ENCODE measurements at regions of chr5 and their contacts with region 1.

Region 1: GRCh38 chr5:112160652-112161391 is 258.3 kb downstream of the EPB41L4A start:
- DNase-seq: peak; percentile 94
- H3K4me3 Mint-ChIP-seq: peak overlapping the region; percentile 86
- H3K27ac Mint-ChIP-seq: peak overlapping the region; percentile 70
- H3K4me1 Mint-ChIP-seq: peaks cover 43% of the 10 kb centered on the region
- H3K27me3 Mint-ChIP-seq: no peaks in the 10 kb centered on the region

Region 2: DNA sequence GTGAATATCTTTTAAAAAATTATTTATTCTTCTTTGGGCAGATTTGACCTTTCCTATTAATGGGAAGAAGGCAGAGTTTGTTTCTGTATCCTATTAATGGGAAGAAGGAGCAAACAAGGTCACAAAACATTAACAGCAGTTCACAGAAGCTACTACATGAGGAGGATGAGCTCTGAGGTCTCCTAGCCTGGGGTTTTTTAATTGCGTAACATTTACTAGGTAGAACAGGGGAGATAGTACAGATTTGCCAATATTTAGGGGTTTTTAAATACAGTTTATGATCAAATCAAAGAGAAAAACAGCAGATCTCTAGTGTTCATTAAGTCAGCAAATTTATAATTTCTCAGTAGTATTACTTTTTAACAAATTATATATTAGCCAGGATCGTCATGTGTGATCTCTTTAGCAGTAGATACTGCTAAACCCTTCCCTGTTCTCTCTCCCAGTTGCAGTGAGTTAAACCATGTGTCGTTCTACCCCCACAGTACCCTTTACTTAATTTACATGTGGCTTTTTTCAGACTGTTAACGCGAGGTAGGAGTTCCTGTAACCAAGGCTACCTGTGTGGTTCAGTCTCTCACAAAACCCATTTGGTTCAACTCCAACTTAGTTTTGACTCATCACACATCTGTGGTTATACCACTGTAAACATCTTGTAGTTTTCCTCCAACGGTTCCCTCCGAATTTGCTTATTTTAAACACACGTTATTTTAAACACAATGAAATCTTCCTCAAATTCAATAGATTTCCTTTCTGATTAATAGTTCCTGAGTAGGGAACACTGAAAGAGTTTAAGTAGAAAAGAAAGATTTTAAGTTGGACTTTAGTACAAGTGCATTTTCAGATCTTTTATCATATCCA is 1408.7 kb before region 1 on chr5:
- CTCF ChIA-PET with region 1: no interaction called
- intact Hi-C with region 1: loop called (anchors 5 kb)
- DNase-seq: peak; percentile 53
- H3K4me3 Mint-ChIP-seq: peak overlapping the region; percentile 19
- H3K27ac Mint-ChIP-seq: peak overlapping the region; percentile 91
- H3K4me1 Mint-ChIP-seq: peaks cover 45% of the 10 kb centered on the region
- H3K27me3 Mint-ChIP-seq: no peaks in the 10 kb centered on the region

Region 3: DNA sequence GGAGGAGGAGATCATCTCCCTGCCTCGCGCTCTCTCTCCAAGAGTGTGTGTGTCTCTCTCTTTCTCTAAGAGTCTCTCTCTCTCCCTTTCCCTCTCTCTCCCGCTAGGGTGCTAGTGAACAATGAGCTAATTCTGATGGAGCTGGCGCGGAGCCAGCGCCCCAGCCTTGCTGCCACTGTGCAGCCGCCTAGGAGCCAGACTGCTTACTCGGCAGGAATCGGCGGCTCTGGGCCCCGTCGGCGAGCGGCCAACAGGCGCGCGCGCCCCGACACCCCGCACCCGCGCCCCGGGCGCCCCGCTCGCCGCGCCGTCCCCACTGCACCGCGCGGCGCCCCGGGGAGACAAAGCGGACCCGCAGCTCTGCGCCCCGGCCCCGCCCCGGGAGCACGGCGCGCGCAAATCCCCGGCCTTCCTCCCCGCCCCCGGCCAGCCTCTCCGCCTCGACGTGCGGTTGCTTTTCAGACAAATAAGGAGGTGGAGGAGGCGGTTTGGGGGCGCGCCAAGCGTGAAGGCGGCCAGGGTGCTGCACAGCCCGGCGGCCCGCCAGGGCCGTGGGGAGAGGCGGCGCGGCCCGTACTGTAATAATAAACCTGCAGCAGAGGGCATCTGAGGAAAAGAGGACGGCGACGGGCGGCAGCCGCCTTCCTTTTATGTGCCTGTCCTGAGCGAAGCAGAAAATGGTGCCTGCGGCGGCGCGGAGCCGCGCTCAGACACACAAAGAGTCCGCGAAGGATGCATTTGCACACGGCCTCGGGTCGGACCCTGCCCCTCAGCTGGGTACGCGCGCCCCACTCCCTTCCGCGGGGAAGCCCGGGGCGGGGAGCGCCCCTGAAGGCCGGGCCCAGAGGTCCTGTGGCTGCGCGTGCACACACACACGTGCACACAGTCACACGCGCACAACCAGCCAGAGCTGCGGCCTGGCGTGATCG is 403.2 kb before region 1 on chr5:
- CTCF ChIA-PET with region 1: no interaction called
- intact Hi-C with region 1: loop called (anchors 1 kb)
- DNase-seq: peak; percentile 83
- H3K4me3 Mint-ChIP-seq: peak overlapping the region; percentile 85
- H3K27ac Mint-ChIP-seq: peak overlapping the region; percentile 77
- H3K4me1 Mint-ChIP-seq: peaks cover 16% of the 10 kb centered on the region
- H3K27me3 Mint-ChIP-seq: no peaks in the 10 kb centered on the region

Region 4: DNA sequence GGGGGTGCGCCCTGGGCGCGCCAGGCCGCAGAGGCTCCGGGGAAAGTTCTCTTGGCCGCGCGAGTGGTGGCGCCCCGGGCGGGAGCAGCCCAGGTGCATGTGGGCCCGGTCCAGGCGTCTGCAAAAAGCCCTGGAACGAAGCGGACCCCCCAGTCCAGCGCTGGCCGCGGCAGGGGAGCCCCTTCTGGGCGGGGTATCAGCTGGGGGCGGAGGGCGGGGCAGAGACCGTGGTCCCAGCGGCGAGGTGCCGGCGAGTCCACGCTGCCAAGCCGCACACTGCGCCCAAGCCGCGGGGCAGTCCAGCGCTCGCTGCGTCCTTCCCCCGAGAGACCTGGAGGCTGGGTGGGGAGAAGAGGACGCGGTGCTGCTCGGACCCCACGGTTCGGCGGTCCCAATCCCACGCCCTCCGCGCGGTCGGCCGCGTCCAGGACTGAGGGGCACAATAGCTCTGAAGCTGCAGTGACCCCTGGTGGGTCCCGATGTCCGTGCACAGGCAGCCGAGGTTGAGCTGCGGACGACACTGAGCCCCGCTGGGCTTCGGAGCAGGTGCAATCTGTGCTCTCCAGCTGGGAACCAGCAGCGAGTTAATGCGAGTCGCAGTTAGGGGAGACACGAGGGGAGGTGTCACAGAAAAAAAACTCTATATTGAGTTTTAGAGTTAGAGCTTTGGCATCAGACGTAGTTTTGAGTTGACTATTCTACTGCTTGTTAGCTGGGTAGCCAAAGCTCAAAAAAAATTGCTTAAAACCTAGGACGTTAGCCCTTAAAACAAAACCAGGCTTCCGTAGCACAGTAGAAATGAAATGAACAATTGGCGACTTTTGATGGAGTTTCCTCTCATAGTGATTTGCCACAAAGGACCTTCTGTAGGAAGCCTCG is 259.4 kb after region 1 on chr5:
- CTCF ChIA-PET with region 1: interaction called, 4 read pairs
- intact Hi-C with region 1: loop called (anchors 5 kb)
- DNase-seq: peak; percentile 60
- H3K4me3 Mint-ChIP-seq: peak overlapping the region; percentile 56
- H3K27ac Mint-ChIP-seq: no peak overlapping the region
- H3K4me1 Mint-ChIP-seq: peaks cover 10% of the 10 kb centered on the region
- H3K27me3 Mint-ChIP-seq: peaks cover 45% of the 10 kb centered on the region

Region 5: DNA sequence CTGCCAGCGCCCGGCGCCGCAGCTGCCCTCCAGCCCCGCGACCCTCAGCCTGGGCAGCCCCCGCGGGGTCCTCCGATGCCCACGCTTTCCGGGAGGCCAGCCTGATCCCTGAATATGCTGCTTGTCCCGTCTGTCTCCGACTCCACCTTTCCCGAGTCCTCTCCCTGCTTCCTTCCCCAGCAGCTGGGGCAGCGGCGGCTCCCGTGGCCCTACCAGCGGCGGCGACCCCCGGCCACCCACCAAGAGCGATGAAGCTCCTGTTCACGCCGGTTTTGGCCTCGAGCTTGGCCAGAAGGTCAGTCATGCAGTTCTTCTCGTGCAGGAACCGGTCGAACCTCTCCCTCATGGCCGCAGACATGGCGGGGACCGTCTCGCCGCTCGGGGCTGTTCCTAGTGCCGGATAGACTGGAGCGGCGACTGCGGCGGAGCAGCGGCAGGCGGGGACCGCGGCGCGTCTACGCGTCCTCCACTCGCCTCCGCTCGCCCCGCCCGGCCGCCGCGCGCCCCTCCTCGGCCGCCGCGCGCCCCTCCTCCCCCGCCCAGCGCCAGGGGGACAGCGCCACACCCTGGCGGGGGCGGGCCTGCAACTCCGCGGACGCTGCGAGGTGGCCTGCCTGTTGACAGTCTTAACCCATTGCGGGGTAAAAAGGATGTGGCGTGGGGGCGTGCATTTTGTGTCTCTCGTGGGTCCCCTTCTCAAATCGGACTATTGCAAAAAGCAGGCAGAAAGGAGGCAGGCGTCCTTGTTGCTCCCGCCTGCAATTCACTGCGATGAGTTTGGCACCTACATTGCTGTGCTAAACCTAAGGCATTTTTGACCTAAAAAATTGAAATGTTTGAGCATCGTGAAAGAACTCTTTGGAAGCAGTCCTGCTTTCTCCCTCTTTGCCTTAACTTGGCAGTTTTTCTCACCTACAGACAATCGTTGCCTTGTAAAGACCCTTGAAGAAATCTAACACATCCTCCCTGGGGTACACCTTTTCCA is 761.3 kb after region 1 on chr5 and contains the start of gene REEP5:
- CTCF ChIA-PET with region 1: no interaction called
- intact Hi-C with region 1: loop called (anchors 5 kb)
- DNase-seq: peak; percentile 76
- H3K4me3 Mint-ChIP-seq: peak within 1 kb of the TSS; percentile 90
- H3K27ac Mint-ChIP-seq: peak within 1 kb of the TSS; percentile 81
- H3K4me1 Mint-ChIP-seq: peaks cover 45% of the 10 kb centered on the region
- H3K27me3 Mint-ChIP-seq: no peaks in the 10 kb centered on the region
- total RNA-seq, gene REEP5: 18.3 to 18.8 TPM

Region 6: DNA sequence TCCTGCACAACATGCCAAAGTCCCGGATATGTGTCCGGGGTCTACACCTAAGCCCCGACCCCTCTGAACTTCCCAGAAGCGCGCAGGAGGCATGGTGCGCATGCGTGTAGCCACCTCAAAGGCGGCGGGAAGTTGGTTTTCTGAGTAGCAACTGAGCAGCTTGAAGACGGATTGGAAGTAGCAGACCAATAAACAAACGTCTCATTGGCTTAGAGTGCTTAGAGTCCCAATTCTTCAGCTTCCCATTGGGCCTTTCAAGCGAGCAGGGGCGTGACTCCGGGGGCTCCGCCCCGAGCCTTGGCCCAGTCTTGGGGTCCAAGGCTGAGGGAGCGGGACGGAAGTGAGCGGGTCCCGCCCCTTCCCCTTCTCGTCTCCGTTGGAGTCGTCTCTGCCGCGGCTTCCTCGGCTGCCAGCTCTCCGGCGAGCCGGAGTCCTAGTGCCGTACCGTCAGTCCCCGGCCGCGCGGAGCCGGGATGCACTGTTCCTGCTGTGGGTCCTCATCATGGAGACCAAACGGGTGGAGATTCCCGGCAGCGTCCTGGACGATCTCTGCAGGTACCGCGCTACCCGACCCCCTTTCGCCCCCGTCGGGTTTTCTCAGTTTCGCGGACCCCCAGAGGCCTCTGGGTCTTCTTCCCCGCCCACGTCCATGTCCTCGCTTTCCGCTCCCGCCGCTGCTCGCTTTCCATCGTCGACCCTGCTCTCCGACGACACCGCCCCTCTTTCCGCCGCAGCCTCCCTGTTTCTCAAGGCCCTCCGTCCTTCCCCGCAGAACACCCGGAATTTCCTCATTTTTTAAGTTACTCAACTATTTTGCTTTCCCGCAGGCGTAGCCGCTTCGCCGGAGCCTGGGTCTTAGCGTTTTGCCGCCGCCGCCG is 815.8 kb after region 1 on chr5 and contains the start of gene DCP2:
- CTCF ChIA-PET with region 1: no interaction called
- intact Hi-C with region 1: loop called (anchors 5 kb)
- DNase-seq: peak; percentile 96
- H3K4me3 Mint-ChIP-seq: peak within 1 kb of the TSS; percentile 96
- H3K27ac Mint-ChIP-seq: peak within 1 kb of the TSS; percentile 95
- H3K4me1 Mint-ChIP-seq: peaks cover 38% of the 10 kb centered on the region
- H3K27me3 Mint-ChIP-seq: no peaks in the 10 kb centered on the region
- total RNA-seq, gene DCP2: 129 TPM

Measured in activated naive CD4-positive, alpha-beta T cell treated with anti-CD3 and anti-CD28 coated beads for 36 hours (primary cell).